ENCODE measurements at regions of chr11 and their contacts with region 1.

Region 1: GRCh38 chr11:32052218-32052617 is 38.7 kb upstream of the RCN1 start:
- DNase-seq: peak; percentile 8 to 70 (median 53)
- ATAC-seq: no peak
- H3K4me3 ChIP-seq: no peak overlapping the region
- H3K4me3 Mint-ChIP-seq: no peak overlapping the region
- H3K27ac ChIP-seq: no peak overlapping the region
- H3K27ac Mint-ChIP-seq: no peak overlapping the region
- H3K4me1 ChIP-seq: no peaks in the 10 kb centered on the region
- H3K4me1 Mint-ChIP-seq: no peaks in the 10 kb centered on the region
- H3K27me3 ChIP-seq: peaks cover 0 to 5% of the 10 kb centered on the region in 2 experiments
- H3K27me3 Mint-ChIP-seq: peaks cover 16% of the 10 kb centered on the region
- CTCF ChIP-seq: peak; percentile 65

Region 2: GRCh38 chr11:32062540-32062939 is 10.3 kb after region 1 on chr11:
- CTCF ChIA-PET with region 1: interaction called, 15 read pairs
- POLR2A ChIA-PET with region 1: no interaction called
- intact Hi-C with region 1: no loop called
- DNase-seq: no peak
- ATAC-seq: no peak
- H3K4me3 ChIP-seq: no peak overlapping the region
- H3K4me3 Mint-ChIP-seq: no peak overlapping the region
- H3K27ac ChIP-seq: no peak overlapping the region
- H3K27ac Mint-ChIP-seq: no peak overlapping the region
- H3K4me1 ChIP-seq: no peaks in the 10 kb centered on the region
- H3K4me1 Mint-ChIP-seq: no peaks in the 10 kb centered on the region
- H3K27me3 ChIP-seq: no peaks in the 10 kb centered on the region
- H3K27me3 Mint-ChIP-seq: peaks cover 22% of the 10 kb centered on the region
- CTCF ChIP-seq: no peak

Region 3: DNA sequence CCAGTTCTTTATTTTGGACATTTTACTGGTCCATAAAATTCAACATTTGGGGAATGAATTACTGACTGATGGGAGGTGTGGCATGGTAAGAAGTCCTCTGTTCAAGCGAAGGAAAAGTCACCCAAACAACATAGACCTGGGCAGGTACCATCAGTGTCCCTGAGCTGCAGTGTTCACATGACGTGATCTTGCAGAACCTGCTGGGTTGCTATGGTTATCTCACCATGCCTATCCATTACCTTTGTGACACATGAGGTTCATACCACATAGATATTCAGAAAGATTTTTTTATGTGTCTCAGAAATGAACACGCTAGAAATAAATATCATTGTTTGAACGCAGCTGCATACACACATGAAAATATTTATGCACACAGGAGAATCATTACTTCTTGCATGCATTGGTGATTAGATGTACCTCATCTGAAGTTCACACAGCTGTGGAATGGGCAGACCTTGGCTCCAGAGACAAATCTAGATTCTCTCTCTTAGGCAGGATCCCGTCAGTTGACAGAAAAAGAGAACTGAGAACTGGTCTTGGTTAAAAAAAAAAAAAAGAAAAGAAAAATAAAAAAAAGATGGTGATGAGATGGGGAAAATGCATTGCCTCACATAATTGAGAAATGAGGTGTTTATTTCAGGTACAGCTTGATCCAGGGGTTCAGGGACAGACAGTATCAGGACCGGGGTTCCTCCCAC is 17.3 kb after region 1 on chr11:
- CTCF ChIA-PET with region 1: interaction called, 14 read pairs
- POLR2A ChIA-PET with region 1: no interaction called
- intact Hi-C with region 1: no loop called
- DNase-seq: no peak
- ATAC-seq: no peak
- H3K4me3 ChIP-seq: no peak overlapping the region
- H3K4me3 Mint-ChIP-seq: no peak overlapping the region
- H3K27ac ChIP-seq: no peak overlapping the region
- H3K27ac Mint-ChIP-seq: no peak overlapping the region
- H3K4me1 ChIP-seq: no peaks in the 10 kb centered on the region
- H3K4me1 Mint-ChIP-seq: no peaks in the 10 kb centered on the region
- H3K27me3 ChIP-seq: no peaks in the 10 kb centered on the region
- H3K27me3 Mint-ChIP-seq: peaks cover 24% of the 10 kb centered on the region
- CTCF ChIP-seq: no peak

Region 4: GRCh38 chr11:32161293-32161692 is 109.1 kb after region 1 on chr11:
- CTCF ChIA-PET with region 1: interaction called, 13 read pairs
- POLR2A ChIA-PET with region 1: no interaction called
- intact Hi-C with region 1: no loop called
- DNase-seq: no peak
- ATAC-seq: no peak
- H3K4me3 ChIP-seq: no peak overlapping the region
- H3K4me3 Mint-ChIP-seq: no peak overlapping the region
- H3K27ac ChIP-seq: no peak overlapping the region
- H3K27ac Mint-ChIP-seq: no peak overlapping the region
- H3K4me1 ChIP-seq: peaks cover 5% of the 10 kb centered on the region
- H3K4me1 Mint-ChIP-seq: peaks cover 2% of the 10 kb centered on the region
- H3K27me3 ChIP-seq: no peaks in the 10 kb centered on the region
- H3K27me3 Mint-ChIP-seq: peaks cover 11% of the 10 kb centered on the region
- CTCF ChIP-seq: no peak

Region 5: GRCh38 chr11:32184041-32184722 is 132.0 kb after region 1 on chr11:
- CTCF ChIA-PET with region 1: interaction called, 14 read pairs
- POLR2A ChIA-PET with region 1: no interaction called
- intact Hi-C with region 1: no loop called
- DNase-seq: no peak
- ATAC-seq: no peak
- H3K4me3 ChIP-seq: no peak overlapping the region
- H3K4me3 Mint-ChIP-seq: no peak overlapping the region
- H3K27ac ChIP-seq: no peak overlapping the region
- H3K27ac Mint-ChIP-seq: no peak overlapping the region
- H3K4me1 ChIP-seq: no peaks in the 10 kb centered on the region
- H3K4me1 Mint-ChIP-seq: no peaks in the 10 kb centered on the region
- H3K27me3 ChIP-seq: no peaks in the 10 kb centered on the region
- H3K27me3 Mint-ChIP-seq: peaks cover 18% of the 10 kb centered on the region
- CTCF ChIP-seq: no peak

Region 6: GRCh38 chr11:32297611-32298011 is 245.4 kb after region 1 on chr11:
- CTCF ChIA-PET with region 1: interaction called, 3 read pairs
- POLR2A ChIA-PET with region 1: no interaction called
- intact Hi-C with region 1: loop called in 1 of 2 experiments (anchors 10 kb)
- DNase-seq: peak in 2 of 9 experiments; percentile 10 to 29
- ATAC-seq: no peak
- H3K4me3 ChIP-seq: no peak overlapping the region
- H3K4me3 Mint-ChIP-seq: no peak overlapping the region
- H3K27ac ChIP-seq: no peak overlapping the region
- H3K27ac Mint-ChIP-seq: no peak overlapping the region
- H3K4me1 ChIP-seq: no peaks in the 10 kb centered on the region
- H3K4me1 Mint-ChIP-seq: no peaks in the 10 kb centered on the region
- H3K27me3 ChIP-seq: no peaks in the 10 kb centered on the region
- H3K27me3 Mint-ChIP-seq: peaks cover 5% of the 10 kb centered on the region
- CTCF ChIP-seq: peak; percentile 17